ENCODE measurements at regions of chr16 and their contacts with region 1.

Region 1: DNA sequence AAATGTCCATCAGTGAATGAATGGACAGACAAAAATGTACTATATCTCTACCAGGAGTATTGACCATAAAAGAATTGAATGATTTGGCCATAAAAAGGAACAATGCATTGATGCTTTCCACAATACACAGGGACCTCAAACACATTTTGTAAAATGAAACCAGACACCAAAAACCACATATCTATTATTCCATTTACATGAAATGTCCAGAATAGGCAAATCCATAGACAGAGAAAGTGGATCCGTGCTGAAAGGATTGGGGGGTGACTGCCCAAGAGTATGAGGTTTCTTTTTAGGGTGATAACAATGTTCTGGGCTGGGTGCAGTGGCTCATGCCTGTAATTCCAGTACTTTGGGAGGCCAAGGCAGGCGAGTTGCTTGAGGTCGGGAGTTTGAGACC is 6.9 kb upstream of the LITAF start:
- DNase-seq: no peak

Region 2: DNA sequence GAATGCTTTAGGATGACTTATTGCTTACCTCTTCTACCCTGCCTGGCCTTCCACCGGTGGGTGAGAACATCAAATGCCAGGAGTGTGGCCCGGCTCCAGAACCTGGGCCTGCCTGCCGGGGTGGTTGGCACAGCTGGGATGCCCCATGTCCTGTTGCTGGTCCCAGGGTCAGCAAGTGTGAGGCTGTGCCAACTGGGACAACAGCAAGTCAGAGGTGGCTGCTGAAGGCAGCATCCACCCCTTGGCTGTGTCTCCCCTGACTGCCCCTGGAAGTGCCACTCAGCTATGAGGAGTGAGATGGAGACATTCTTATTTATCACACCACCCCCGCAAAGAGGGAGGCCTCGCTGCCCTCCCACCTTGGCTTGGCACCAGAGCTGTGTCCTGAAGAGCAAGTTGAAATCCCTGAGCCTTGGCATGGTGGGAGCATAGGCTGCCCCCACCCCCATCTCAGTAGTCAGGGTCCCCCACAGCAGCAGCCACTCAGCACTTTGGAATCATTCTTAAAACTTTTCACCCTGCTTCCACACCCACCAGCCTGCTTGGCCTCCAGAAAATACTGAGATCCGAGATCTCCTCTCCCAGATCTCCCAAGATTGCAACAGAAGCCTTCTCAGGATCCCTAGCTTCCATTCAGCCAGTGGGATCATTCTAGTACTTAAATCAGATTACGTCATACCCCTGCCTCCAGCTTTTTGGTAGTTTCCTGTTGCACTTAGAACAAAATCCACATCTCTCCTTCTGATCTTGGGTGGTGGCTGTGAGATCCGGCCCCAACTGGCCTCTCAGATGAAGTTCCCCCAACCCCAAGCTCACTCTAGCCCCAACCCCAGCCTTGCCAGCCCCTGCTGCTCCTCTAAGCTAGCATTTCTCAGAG is 465.1 kb before region 1 on chr16:
- intact Hi-C with region 1: no loop called
- DNase-seq: peak; percentile 54

Region 3: DNA sequence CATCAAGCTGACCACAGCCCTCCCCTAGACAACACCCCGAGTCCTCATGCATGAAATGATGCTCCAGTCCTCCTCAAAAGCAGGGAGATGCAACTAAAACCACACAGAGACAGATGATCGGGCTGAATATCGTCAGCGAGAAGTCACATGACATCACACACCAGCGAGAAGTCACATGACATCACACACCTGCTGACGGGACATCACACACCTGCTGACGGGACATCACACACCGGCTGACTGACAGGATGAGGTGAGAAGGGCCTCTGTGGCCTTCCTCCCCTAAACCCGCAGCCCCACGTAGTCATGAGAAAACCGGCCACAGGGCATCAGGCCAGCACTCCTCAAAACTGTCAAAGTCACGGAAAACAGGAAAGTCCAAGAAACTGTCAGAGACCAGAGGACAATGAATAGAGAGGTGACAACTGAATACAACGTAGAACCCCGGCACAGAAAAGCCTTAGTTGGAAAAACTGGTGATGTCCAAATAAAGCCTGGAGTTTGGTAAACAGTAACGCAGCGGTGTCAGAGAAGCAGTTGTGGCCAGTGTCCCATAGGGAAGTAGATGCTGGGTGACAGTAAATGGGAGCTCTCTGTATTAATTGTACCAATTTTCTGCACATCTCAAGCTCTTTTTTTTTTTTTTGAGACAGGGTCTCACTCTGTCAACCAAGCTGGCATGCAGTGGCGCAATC is 21.1 kb before region 1 on chr16:
- intact Hi-C with region 1: no loop called
- DNase-seq: peak; percentile 72

Region 4: GRCh38 chr16:12303653-12304052 is 710.1 kb after region 1 on chr16:
- intact Hi-C with region 1: loop called in 1 of 2 experiments (anchors 5 kb)
- DNase-seq: peak; percentile 14